Naive thymus-derived CD4-positive, alpha-beta T cell (primary cell): ENCODE measurements at regions of chr16 and their contacts with region 1.

Region 1: GRCh38 chr16:31487720-31488467 is 5.0 kb downstream of the SLC5A2 start:
- DNase-seq: peak; percentile 55 to 79 (median 74)
- ATAC-seq: peak; percentile 92
- H3K4me3 ChIP-seq: peak overlapping the region; percentile 89
- H3K4me3 Mint-ChIP-seq: peak overlapping the region; percentile 89 to 95 (median 92)
- H3K27ac ChIP-seq: peak overlapping the region; percentile 62
- H3K27ac Mint-ChIP-seq: peak overlapping the region in 8 of 9 donors; percentile 51 to 90 (median 84)
- H3K4me1 ChIP-seq: no peaks in the 10 kb centered on the region
- H3K4me1 Mint-ChIP-seq: peaks cover 5 to 24% (median 13%) of the 10 kb centered on the region in 7 donors
- H3K27me3 ChIP-seq: no peaks in the 10 kb centered on the region
- H3K27me3 Mint-ChIP-seq: peaks cover 0 to 17% (median 0%) of the 10 kb centered on the region in 5 donors

Region 2: DNA sequence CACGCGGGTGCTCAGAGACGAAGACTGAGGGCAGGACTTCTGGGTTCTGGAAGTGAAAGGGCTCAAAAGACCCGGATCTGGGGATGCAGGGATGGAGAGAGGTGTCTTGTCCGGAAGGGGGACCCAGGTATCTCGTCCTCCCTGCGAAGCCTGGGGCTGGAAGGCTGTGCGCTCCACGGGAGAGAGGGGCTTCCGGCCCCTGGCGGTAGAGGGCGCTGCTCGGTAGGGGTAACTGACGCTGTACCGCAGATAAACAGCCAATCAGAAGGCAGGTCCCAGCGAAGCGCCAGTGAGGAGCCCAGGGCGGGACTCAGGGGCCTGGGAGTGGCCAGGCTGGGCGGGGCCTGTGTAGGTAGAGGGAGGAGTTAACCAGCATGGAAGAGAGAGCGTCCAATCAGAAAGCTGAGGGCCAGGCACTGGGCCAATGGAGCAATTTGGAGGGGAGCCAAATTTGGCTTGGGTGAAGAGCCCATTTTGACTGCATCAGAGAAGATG is 15.1 kb before region 1 on chr16:
- CTCF ChIA-PET with region 1: no interaction called
- POLR2A ChIA-PET with region 1: interaction called, 12 read pairs
- intact Hi-C with region 1: loop called (anchors 1 kb)
- DNase-seq: peak in 1 of 9 donors; percentile 36
- ATAC-seq: peak; percentile 33
- H3K4me3 ChIP-seq: no peak overlapping the region
- H3K4me3 Mint-ChIP-seq: peak overlapping the region; percentile 60 to 84 (median 79)
- H3K27ac ChIP-seq: no peak overlapping the region
- H3K27ac Mint-ChIP-seq: peak overlapping the region in 1 of 9 donors; percentile 64
- H3K4me1 ChIP-seq: peaks cover 4 to 6% of the 10 kb centered on the region in 2 donors
- H3K4me1 Mint-ChIP-seq: peaks cover 8 to 29% (median 21%) of the 10 kb centered on the region in 7 donors
- H3K27me3 ChIP-seq: no peaks in the 10 kb centered on the region
- H3K27me3 Mint-ChIP-seq: peaks cover 0 to 52% (median 14%) of the 10 kb centered on the region in 5 donors

Region 3: DNA sequence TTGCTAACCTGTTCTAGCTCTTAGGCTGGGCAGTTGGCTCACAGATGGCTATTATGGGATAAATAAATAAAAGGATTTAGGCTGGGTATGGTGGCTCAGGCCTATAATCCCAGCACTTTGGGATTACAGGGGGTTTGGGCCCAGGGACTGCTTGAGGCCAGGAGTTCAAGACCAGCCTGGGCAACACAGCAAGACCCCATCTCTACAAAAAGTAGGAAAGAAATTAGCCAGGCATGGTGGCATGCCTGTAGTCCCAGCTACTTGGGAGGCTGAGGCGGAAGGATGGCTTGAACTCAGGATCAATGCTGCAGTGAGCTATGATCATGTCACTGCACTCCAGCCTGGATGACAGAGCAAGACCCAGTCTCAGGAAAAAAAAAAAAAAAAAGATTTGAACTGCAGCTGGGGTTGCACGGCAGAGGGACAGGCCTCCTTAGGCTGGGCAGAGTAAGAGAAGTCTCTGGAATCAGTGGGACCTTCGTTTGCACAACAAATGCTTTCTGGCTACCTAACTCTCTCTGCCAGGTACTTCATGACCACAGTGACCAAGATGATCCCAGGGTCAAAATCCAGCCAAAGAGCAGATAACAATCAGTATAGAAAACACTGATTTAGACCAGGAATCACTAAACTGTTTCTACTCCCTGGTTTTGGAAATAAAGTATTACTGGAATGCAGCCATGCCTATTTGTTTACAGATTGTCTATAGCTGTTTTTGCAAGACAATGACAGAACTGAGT is 13.5 kb after region 1 on chr16:
- CTCF ChIA-PET with region 1: interaction called, 3 read pairs
- POLR2A ChIA-PET with region 1: interaction called, 15 read pairs
- intact Hi-C with region 1: no loop called
- DNase-seq: no peak
- ATAC-seq: no peak
- H3K4me3 ChIP-seq: no peak overlapping the region
- H3K4me3 Mint-ChIP-seq: no peak overlapping the region
- H3K27ac ChIP-seq: no peak overlapping the region
- H3K27ac Mint-ChIP-seq: no peak overlapping the region
- H3K4me1 ChIP-seq: no peaks in the 10 kb centered on the region
- H3K4me1 Mint-ChIP-seq: peaks cover 13 to 44% (median 27%) of the 10 kb centered on the region in 7 donors
- H3K27me3 ChIP-seq: no peaks in the 10 kb centered on the region
- H3K27me3 Mint-ChIP-seq: no peaks in the 10 kb centered on the region

Region 4: DNA sequence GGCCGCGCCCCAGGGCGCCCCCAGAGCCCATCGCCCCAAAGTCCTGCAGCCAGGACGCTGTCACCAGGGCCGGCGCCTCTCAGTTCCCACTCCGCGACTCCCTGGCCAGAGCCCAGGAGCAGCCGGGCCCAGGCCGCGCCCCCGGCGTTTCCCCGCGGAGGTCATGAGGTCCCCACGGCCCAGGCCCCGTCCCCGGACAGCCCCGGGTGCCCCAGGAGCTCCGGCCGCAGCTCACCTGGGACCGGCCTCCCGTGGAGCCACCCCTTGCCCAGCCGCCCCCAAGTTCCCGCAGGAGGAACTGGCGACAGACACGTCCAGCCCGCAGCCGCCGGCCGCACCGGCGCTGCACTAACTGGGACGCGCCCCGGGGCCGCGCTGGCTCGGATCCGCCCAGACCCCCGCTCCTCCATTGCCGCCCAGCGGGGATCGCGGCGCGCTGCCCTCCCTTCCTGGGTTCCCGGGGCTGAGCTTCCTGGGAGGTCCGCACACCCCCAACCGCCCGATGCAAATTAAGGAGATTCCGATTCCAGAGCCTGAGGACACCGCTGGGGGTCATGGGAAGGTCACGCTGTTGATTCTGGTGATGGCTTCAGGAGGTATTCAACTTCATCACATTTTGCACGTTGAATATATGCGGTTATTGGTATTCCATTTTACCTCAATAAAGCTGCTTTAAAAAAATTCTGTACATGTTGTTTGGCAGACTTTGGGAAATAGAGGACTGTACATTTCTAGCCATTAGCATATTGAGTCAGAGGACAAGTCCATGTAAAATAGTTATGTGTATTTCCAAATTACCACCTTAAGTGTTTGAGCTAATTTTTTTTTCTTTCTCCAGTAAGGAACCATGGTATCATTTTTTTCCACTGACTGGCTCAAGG is 49.7 kb after region 1 on chr16:
- CTCF ChIA-PET with region 1: no interaction called
- POLR2A ChIA-PET with region 1: no interaction called
- intact Hi-C with region 1: no loop called
- DNase-seq: no peak
- ATAC-seq: no peak
- H3K4me3 ChIP-seq: no peak overlapping the region
- H3K4me3 Mint-ChIP-seq: peak overlapping the region in 8 of 10 donors; percentile 47 to 73 (median 62)
- H3K27ac ChIP-seq: no peak overlapping the region
- H3K27ac Mint-ChIP-seq: no peak overlapping the region
- H3K4me1 ChIP-seq: no peaks in the 10 kb centered on the region
- H3K4me1 Mint-ChIP-seq: peaks cover 0 to 11% (median 4%) of the 10 kb centered on the region in 7 donors
- H3K27me3 ChIP-seq: peaks cover 0 to 5% of the 10 kb centered on the region in 2 donors
- H3K27me3 Mint-ChIP-seq: peaks cover 39 to 70% (median 48%) of the 10 kb centered on the region in 5 donors

Region 5: DNA sequence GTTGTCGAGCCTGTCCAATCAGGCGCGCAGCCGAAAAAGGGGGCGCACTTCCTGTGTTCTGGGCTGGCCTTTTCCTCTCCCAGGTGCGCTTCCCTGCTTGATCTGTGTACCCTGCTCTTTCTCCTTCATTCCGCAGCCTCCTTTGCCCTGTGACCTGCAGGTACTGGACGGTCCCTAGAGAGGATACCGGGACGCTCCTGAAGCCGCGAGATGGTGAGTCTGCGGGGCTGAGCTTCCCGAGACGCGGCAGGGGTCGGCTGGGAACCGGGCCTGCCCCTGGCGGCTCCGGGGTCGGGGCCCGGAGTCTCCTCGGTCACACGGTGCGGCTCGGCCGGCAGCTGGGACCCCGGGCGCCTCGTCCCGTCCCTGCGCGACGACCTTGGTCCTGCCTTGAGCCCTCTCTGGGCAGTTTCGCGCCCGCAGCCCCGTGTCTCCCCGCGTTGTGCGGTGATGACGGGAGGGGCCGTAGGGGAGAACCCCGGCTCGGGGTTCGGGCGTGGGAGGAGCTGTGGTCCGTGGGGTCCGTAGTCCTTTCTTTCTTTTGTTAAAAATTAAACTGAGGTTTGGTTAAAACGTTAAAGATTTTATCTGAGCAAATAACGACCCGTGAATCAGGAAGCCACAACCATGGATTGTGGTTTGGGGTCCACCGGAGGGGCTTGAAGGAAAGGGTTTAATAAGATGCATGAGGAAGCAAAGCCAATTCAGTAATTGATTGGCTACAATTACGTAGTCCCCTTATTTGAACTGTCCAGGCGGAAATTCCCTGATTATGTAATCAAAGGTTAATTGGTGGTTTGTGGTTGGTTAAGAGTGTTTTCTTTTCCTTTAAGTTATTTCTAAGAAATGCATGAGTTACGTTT is 212.9 kb after region 1 on chr16:
- CTCF ChIA-PET with region 1: no interaction called
- POLR2A ChIA-PET with region 1: no interaction called
- intact Hi-C with region 1: loop called in 1 of 2 experiments (anchors 1 kb)
- DNase-seq: peak; percentile 67 to 86 (median 81)
- ATAC-seq: peak; percentile 84
- H3K4me3 ChIP-seq: peak overlapping the region; percentile 95
- H3K4me3 Mint-ChIP-seq: peak overlapping the region; percentile 87 to 95 (median 91)
- H3K27ac ChIP-seq: peak overlapping the region; percentile 90
- H3K27ac Mint-ChIP-seq: peak overlapping the region; percentile 86 to 97 (median 93)
- H3K4me1 ChIP-seq: peaks cover 19 to 28% of the 10 kb centered on the region in 2 donors
- H3K4me1 Mint-ChIP-seq: peaks cover 20 to 39% (median 37%) of the 10 kb centered on the region in 7 donors
- H3K27me3 ChIP-seq: no peaks in the 10 kb centered on the region
- H3K27me3 Mint-ChIP-seq: peaks cover 0 to 24% (median 0%) of the 10 kb centered on the region in 5 donors